ENCODE measurements at regions of chr10 and their contacts with region 1.

Region 1: DNA sequence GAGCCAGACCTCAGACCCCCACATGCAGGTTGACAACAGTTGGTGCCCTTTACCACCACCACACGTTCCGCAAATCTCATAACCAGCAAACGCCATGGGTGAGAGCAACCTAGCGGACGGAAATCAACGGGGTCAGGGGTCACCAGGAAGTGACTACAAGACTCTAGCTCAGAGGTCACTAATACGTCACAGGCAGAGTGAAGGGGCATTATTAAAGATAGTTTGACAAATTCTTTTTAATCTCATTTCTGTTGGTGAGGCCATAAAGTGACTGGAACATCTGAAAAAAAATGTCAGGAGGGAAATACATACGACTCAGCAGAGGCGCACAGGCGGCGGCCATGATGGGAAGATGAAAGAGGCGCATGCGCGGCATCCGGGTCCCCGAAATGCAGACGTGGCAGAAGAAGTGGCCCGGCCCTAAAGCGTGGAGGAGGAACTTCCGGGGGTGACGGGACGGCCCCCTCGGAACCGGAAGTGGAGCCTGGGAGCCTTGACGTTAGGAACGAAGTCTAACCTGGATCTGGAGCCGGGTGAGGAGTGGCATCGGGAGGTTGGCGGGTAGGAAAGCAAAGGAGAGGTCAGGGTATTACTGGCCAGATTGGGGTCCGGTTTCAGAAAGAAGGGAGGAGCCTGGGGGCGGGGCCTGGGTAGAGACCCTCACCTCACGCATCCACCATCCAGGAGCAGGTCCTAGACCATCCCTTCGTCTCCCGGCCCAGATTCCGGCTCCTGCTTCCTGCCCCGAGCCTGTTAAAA is at the start of gene SEC24C:
- DNase-seq: peak; percentile 100
- ATAC-seq: peak; percentile 83
- H3K4me3 ChIP-seq: peak within 1 kb of the TSS; percentile 68
- H3K27ac ChIP-seq: peak within 1 kb of the TSS; percentile 64
- H3K4me1 ChIP-seq: peaks cover 43% of the 10 kb centered on the region
- H3K27me3 ChIP-seq: no peaks in the 10 kb centered on the region
- CTCF ChIP-seq: no peak
- total RNA-seq, gene SEC24C: 285 and 325 TPM in 2 replicates

Region 2: GRCh38 chr10:73529089-73529832 is 214.8 kb before region 1 on chr10:
- CTCF ChIA-PET with region 1: no interaction called
- POLR2A ChIA-PET with region 1: no interaction called
- intact Hi-C with region 1: loop called (anchors 1 kb)
- DNase-seq: peak; percentile 99
- ATAC-seq: peak; percentile 97
- H3K4me3 ChIP-seq: no peak overlapping the region
- H3K27ac ChIP-seq: no peak overlapping the region
- H3K4me1 ChIP-seq: no peaks in the 10 kb centered on the region
- H3K27me3 ChIP-seq: no peaks in the 10 kb centered on the region
- CTCF ChIP-seq: peak; percentile 100

Region 3: DNA sequence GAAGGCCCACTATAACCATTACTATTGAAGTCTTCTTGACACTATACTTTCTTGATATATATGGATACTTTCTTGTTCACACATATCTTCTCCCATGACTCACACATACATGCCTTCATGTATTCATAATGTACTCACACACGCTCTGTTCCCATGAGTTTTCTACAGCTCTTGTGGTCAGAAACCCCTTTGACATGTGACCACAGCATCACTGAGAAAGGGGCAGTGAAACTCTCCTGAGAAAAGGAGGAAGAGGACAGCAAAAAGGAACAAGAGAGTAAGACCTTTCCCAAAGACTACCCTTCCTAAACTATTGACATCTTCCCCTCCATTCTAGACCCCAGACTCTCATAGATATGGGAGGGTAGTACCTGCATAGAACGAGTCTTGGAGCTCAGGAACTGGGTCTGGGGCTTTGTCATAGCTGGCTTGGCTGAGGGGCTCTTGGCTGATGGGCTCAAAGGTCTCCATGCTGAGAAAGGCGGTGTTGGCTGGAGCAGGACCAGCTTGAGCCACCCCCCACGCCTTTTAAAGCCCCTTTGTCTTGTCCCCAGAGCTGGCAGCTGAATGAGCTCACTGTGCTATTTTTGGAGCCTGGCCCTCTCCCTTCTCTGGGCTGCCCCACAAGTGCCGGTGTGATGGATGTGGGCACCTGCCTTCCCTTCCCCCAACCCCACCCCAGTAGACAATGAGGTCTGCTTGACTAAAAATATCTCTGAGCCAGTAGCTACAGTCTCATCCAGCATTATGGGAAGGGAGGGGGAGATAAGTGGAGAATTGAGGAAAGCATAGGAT is 93.3 kb before region 1 on chr10:
- CTCF ChIA-PET with region 1: interaction called, 5 read pairs
- POLR2A ChIA-PET with region 1: no interaction called
- intact Hi-C with region 1: loop called (anchors 1 kb)
- DNase-seq: peak; percentile 53
- ATAC-seq: no peak
- H3K4me3 ChIP-seq: no peak overlapping the region
- H3K27ac ChIP-seq: no peak overlapping the region
- H3K4me1 ChIP-seq: no peaks in the 10 kb centered on the region
- H3K27me3 ChIP-seq: no peaks in the 10 kb centered on the region
- CTCF ChIP-seq: no peak

Region 4: DNA sequence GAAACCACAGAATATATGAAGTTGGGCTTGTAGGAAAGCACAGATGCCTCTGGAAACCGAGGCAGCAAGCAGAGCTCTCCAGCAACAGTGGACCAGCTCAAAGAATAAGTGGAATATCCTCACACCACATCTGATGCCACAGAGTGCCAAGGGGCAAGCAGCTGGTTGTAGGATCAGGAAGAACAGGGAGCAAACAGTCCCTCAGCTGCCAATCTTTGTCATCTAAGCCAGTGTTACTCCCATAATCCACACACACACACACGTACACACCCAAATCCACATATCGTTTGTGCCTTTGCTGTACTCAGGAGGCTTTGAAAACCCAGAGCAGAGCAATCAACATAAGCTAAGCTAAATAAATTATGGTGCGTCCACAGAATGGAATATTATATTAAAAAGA is 20.6 kb before region 1 on chr10:
- CTCF ChIA-PET with region 1: interaction called, 3 read pairs
- POLR2A ChIA-PET with region 1: interaction called, 12 read pairs
- intact Hi-C with region 1: no loop called
- DNase-seq: no peak
- ATAC-seq: no peak
- H3K4me3 ChIP-seq: no peak overlapping the region
- H3K27ac ChIP-seq: no peak overlapping the region
- H3K4me1 ChIP-seq: no peaks in the 10 kb centered on the region
- H3K27me3 ChIP-seq: no peaks in the 10 kb centered on the region
- CTCF ChIP-seq: no peak

Region 5: DNA sequence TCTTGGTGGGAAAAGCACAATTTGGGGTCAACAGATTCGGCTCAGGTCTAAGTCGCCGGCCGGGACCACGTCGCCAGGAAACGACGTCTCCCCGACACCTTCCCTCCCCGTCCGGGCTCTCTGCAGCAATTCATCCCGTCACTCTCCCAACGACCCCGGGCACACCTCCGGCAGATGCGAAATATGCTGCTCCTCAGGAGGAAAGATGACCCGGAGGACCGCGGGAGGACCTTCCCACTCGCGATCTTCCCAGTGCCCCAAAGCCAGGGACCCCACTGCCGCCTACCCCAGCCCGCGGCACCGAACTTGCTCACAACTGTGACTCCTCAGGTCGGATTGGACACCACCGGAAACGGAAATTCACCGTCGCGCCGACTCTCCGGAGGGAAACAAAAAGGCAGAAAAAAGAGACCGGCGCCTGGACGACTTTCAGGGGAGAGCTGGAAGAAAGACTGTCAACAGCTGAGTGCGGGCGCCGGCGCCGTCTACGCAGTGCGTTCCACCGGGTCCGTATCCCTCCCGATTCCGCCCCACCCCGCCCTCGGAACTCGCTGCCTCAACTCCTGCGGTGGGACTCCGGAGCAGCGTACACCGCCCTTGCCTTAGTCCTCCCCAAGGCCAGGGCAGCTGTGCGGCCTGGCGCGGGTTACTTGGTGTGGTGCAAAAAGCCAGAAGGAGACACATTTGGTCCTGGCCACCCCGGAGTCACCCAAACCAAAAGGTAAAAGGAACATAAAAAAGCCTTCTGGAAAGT is 13.8 kb before region 1 on chr10:
- CTCF ChIA-PET with region 1: interaction called, 3 read pairs
- POLR2A ChIA-PET with region 1: interaction called, 24 read pairs
- intact Hi-C with region 1: loop called (anchors 1 kb)
- DNase-seq: peak; percentile 100
- ATAC-seq: peak; percentile 87
- H3K4me3 ChIP-seq: peak overlapping the region; percentile 69
- H3K27ac ChIP-seq: peak overlapping the region; percentile 72
- H3K4me1 ChIP-seq: peaks cover 9% of the 10 kb centered on the region
- H3K27me3 ChIP-seq: no peaks in the 10 kb centered on the region
- CTCF ChIP-seq: no peak

Region 6: DNA sequence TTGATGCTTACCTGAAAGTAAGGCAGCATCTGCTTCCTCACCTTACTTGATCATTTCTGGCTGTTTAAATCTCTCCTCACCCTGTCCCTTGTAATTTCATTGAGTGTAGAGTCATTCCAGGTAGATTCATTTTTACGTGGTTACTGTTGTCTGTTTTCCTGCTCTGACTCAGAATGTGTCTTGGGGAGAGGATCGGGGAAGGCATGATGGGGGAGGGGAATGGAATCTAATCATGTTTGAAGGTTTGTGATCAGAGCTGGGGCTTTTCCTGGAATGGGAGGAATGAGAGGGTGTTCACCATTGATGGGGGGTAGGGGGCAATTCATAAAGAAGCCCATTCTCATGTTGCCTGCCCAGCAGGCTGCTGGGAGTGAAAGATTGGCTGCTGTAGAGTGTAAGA is 18.8 kb after region 1 on chr10:
- CTCF ChIA-PET with region 1: no interaction called
- POLR2A ChIA-PET with region 1: interaction called, 5 read pairs
- intact Hi-C with region 1: loop called (anchors 2 kb)
- DNase-seq: peak; percentile 99
- ATAC-seq: peak; percentile 94
- H3K4me3 ChIP-seq: peak overlapping the region; percentile 1; the same call in 1 of the 2 replicates
- H3K27ac ChIP-seq: peak overlapping the region; percentile 56
- H3K4me1 ChIP-seq: peaks cover 34% of the 10 kb centered on the region
- H3K27me3 ChIP-seq: no peaks in the 10 kb centered on the region
- CTCF ChIP-seq: no peak

Region 7: GRCh38 chr10:73772280-73773151 is 28.4 kb after region 1 on chr10:
- CTCF ChIA-PET with region 1: interaction called, 4 read pairs
- POLR2A ChIA-PET with region 1: interaction called, 5 read pairs
- intact Hi-C with region 1: loop called (anchors 1 kb)
- DNase-seq: peak; percentile 99
- ATAC-seq: peak; percentile 66
- H3K4me3 ChIP-seq: peak overlapping the region; percentile 73
- H3K27ac ChIP-seq: peak overlapping the region; percentile 71
- H3K4me1 ChIP-seq: peaks cover 26% of the 10 kb centered on the region
- H3K27me3 ChIP-seq: no peaks in the 10 kb centered on the region
- CTCF ChIP-seq: peak; percentile 53

Region 8: GRCh38 chr10:73837072-73837471 is 93.0 kb after region 1 on chr10:
- CTCF ChIA-PET with region 1: no interaction called
- POLR2A ChIA-PET with region 1: no interaction called
- intact Hi-C with region 1: no loop called
- DNase-seq: peak; percentile 74
- ATAC-seq: peak; percentile 85
- H3K4me3 ChIP-seq: no peak overlapping the region
- H3K27ac ChIP-seq: peak overlapping the region; percentile 25
- H3K4me1 ChIP-seq: peaks cover 22% of the 10 kb centered on the region
- H3K27me3 ChIP-seq: no peaks in the 10 kb centered on the region
- CTCF ChIP-seq: no peak

Region 9: DNA sequence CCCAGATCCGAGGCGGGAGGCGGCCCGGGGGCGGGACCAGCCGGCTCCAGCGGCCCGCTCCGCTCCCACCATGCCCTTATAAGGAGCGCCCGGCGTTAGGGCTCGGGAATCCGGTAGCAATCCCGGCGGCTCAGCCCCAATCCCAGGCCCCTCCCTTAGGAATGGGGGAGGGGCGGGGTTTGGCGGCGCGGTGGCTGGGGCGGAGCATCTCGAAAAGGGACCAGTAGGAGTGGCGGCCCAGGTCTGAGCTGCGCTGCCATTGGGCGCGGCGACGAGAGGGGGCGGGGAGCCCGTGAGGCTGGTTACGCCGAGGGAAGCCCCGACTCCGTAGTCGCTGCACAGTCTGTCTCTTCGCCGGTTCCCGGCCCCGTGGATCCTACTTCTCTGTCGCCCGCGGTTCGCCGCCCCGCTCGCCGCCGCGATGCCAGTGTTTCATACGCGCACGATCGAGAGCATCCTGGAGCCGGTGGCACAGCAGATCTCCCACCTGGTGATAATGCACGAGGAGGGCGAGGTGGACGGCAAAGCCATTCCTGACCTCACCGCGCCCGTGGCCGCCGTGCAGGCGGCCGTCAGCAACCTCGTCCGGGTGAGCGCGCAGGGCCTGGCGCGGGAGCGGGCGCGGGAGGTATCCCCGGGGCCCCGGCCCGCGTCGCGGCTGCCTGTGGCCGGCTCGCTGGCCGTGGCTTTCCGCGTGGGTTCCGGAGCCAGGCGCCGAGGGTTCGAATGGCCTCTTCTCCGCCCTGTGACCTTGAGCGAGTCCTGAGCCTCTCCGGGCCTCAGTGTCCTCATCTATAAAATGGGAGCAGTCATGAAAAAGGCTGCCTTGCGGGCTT is 253.9 kb after region 1 on chr10 and contains the start of gene VCL:
- CTCF ChIA-PET with region 1: no interaction called
- POLR2A ChIA-PET with region 1: no interaction called
- intact Hi-C with region 1: no loop called
- DNase-seq: peak; percentile 100
- ATAC-seq: peak; percentile 83
- H3K4me3 ChIP-seq: peak within 1 kb of the TSS; percentile 73
- H3K27ac ChIP-seq: peak within 1 kb of the TSS; percentile 66
- H3K4me1 ChIP-seq: peaks cover 32% of the 10 kb centered on the region
- H3K27me3 ChIP-seq: no peaks in the 10 kb centered on the region
- CTCF ChIP-seq: no peak
- total RNA-seq, gene VCL: 382 and 445 TPM in 2 replicates